Activated CD8-positive, alpha-beta T cell treated with anti-CD3 and anti-CD28 coated beads for 36 hours (primary cell): ENCODE measurements at regions of chr12 and their contacts with region 1.

Region 1: DNA sequence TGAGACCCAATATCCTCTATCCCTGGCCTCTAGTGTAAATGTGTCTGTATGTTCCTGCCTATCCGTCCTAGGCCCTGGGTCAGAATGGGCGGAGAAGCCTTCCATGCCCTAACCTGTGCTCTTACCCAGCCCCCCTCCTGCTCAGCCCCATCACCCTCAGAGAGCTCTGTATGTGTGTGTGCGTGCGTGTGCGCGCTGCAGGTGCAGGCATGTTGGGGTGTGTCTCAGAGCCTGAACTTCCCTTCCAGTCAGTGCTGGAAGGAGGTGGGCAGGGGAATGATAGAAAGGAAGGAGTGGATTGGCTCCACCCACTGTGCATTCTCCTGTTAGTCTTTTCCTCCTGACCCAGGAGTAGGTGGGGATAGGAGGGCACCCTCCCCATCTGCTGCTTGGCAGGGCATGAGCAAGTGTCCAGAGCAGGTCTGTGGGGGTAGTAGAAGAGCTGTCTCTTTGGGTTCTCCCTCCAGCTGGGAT is 7.2 kb downstream of the NAB2 start:
- DNase-seq: no peak
- ATAC-seq: no peak
- H3K4me3 Mint-ChIP-seq: no peak overlapping the region
- H3K27ac Mint-ChIP-seq: peak overlapping the region; percentile 92
- H3K4me1 Mint-ChIP-seq: peaks cover 77% of the 10 kb centered on the region
- H3K27me3 Mint-ChIP-seq: no peaks in the 10 kb centered on the region
- CTCF ChIP-seq: no peak

Region 2: DNA sequence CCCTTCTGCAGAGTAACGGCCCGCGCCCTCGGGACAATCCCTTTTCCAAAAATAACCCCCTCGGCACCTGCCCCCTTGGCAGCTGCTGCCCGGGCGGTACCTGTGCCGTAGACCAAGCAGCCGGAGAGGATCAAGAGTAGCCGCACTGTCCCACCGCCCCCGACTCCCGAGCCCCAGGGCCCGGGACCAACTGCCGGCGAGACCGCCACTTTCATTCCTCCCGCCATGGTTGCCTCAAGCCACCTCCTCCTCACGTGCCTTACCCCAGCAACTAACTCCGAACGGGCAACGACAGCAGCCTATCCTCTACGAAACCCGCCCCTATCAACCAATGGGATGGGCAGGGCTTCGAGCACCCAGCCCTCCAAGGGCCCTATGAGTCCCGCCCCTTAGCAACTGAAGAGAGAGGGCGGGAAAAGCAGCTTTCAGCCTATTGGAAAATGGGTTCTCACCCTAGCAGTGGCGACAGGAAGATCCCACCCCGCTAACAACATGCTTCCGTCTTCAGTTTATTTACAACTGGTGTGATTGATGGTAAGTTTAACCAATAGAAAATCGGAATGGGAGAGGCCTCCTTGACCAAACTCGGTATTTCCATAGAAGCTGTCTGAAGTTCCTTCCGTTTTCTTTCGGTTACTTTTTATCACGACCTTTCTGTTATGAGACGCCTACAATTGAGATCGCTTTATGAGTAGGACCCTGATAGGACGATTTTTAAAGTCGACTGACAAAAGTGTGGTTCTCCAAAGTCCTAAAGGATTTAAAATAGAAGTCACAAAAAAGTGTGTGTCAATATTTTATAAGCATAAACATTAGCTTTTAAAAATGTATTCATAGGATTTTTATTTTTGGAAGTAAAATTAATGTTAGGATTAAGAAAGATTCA is 17.4 kb before region 1 on chr12 and contains the start of gene NEMP1:
- CTCF ChIA-PET with region 1: interaction called, 193 read pairs
- POLR2A ChIA-PET with region 1: interaction called, 155 read pairs
- intact Hi-C with region 1: no loop called
- DNase-seq: peak; percentile 98
- ATAC-seq: peak; percentile 96
- H3K4me3 Mint-ChIP-seq: peak within 1 kb of the TSS; percentile 100
- H3K27ac Mint-ChIP-seq: peak within 1 kb of the TSS; percentile 99
- H3K4me1 Mint-ChIP-seq: peaks cover 31% of the 10 kb centered on the region
- H3K27me3 Mint-ChIP-seq: no peaks in the 10 kb centered on the region
- CTCF ChIP-seq: no peak
- total RNA-seq, gene NEMP1: 76.1 to 80.6 TPM

Region 3: DNA sequence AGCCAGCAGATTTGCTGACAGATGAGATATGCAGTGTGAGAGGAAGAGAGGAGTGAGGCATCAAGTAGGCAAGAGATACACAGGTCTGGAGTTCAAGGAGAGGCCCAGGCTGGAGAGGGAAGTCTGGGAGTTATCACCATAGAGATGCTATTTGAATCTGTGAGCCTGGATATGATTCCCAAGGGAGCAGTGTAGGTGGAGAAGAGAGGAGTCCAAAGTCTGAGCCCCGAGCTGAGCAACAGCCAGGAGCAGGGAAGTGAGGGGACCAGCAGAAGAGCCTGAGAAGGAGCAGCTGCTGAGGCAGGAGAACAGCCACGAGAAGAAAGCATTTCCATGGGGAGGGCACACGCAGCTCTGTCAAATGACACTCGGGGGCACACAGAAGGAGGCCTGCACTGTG is 100.3 kb after region 1 on chr12:
- CTCF ChIA-PET with region 1: no interaction called
- POLR2A ChIA-PET with region 1: no interaction called
- intact Hi-C with region 1: no loop called
- DNase-seq: no peak
- ATAC-seq: no peak
- H3K4me3 Mint-ChIP-seq: no peak overlapping the region
- H3K27ac Mint-ChIP-seq: no peak overlapping the region
- H3K4me1 Mint-ChIP-seq: no peaks in the 10 kb centered on the region
- H3K27me3 Mint-ChIP-seq: no peaks in the 10 kb centered on the region
- CTCF ChIP-seq: no peak